Dorsolateral prefrontal cortex (tissue), 120 donors: ENCODE measurements at regions of chr9 and their contacts with region 1.

Region 1: GRCh38 chr9:111037381-111038305 is 627 bp downstream of the LPAR1 start:
- DNase-seq: peak in 4 of 10 donors; percentile 28 to 54 (median 42)
- H3K4me3 ChIP-seq: peak overlapping the region; percentile 45 to 88 (median 72)
- H3K27ac ChIP-seq: peak overlapping the region; percentile 38 to 97 (median 93)
- H3K27me3 ChIP-seq: peaks cover 0 to 49% (median 28%) of the 10 kb centered on the region in 45 donors
- CTCF ChIP-seq: peak in 19 of 56 donors; percentile 7 to 43 (median 21)

Region 2: DNA sequence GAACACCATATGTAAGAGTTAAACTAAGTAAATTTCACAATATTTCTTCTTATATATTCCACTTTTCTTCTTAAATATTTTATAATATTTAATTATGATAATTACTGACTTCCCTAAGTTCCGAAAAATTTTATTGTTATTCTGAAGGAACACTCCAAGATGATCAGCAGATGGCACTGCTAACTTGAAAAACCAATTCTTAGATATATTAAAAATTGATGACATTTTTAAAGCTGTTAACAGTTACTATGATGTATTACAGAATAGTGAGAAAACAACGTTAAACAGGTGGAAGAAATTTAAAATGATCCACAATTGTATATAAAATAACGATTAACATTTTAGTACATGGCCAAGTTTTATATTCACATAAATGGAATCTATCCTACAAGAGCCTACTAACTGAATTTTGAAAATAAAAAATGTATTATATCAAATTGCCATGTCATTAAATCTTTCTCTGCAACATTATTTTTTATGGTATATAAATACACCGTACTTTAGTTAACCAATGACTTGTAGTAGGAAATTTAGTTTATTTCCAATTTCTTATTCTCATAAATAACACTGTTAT is 399.2 kb before region 1 on chr9:
- intact Hi-C with region 1: loop called in 1 of 2 experiments (anchors 10 kb)
- DNase-seq: no peak
- H3K4me3 ChIP-seq: no peak overlapping the region
- H3K27ac ChIP-seq: peak overlapping the region in 4 of 59 donors; percentile 5 to 37 (median 13)
- H3K27me3 ChIP-seq: no peaks in the 10 kb centered on the region
- CTCF ChIP-seq: peak; percentile 37 to 87 (median 64)

Region 3: GRCh38 chr9:110650991-110651411 is 386.6 kb before region 1 on chr9:
- intact Hi-C with region 1: loop called (anchors 5 to 10 kb)
- DNase-seq: no peak
- H3K4me3 ChIP-seq: peak overlapping the region in 23 of 59 donors; percentile 3 to 51 (median 20)
- H3K27ac ChIP-seq: peak overlapping the region in 58 of 59 donors; percentile 74 to 98 (median 91)
- H3K27me3 ChIP-seq: no peaks in the 10 kb centered on the region
- CTCF ChIP-seq: no peak

Region 4: DNA sequence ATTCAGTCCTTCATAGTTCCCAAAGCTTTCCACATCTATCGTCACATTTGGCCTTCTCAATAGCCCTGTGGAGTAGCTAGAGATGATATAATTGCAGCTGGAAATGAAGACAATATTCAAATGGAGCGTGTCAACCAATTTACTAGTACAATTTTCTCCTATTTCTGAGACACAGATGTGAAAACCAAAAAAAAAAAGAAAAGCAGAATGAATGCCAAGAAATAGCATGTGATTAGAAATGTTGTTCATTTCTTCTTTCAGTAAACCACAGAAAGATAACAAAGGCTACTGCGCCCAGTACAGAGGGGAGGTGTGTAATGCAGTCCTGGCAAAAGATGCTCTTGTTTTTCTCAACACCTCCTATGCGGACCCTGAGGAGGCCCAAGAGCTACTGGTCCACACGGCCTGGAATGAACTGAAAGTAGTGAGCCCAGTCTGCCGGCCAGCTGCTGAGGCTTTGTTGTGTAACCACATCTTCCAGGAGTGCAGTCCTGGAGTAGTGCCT is 270.0 kb before region 1 on chr9:
- intact Hi-C with region 1: loop called (anchors 10 kb)
- DNase-seq: peak in 6 of 10 donors; percentile 31 to 54 (median 40)
- H3K4me3 ChIP-seq: peak overlapping the region in 25 of 59 donors; percentile 0 to 45 (median 22)
- H3K27ac ChIP-seq: peak overlapping the region; percentile 28 to 96 (median 89)
- H3K27me3 ChIP-seq: no peaks in the 10 kb centered on the region
- CTCF ChIP-seq: peak in 4 of 56 donors; percentile 3 to 11 (median 8)

Region 5: DNA sequence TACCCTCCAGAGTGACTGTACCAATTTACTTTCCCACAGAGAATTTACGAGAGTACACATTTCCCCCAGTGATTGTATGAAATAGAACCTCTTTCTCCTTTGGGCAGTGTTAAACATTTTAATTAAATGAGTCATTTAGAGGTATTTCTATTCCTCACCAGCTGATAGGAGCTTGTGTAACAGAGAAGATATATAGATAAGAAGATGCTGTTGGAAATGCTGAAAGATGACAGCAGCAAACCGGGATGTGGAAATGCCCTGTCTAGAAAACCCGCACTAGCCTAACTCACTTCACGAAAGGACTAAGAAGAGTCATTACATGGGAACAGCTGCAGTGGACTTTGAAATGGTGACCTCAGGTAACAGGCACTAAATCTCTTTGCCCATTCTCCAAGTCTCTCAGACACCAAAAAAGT is 67.7 kb before region 1 on chr9:
- intact Hi-C with region 1: loop called (anchors 5 to 10 kb)
- DNase-seq: no peak
- H3K4me3 ChIP-seq: no peak overlapping the region
- H3K27ac ChIP-seq: peak overlapping the region in 57 of 59 donors; percentile 9 to 97 (median 88)
- H3K27me3 ChIP-seq: no peaks in the 10 kb centered on the region
- CTCF ChIP-seq: no peak

Region 6: DNA sequence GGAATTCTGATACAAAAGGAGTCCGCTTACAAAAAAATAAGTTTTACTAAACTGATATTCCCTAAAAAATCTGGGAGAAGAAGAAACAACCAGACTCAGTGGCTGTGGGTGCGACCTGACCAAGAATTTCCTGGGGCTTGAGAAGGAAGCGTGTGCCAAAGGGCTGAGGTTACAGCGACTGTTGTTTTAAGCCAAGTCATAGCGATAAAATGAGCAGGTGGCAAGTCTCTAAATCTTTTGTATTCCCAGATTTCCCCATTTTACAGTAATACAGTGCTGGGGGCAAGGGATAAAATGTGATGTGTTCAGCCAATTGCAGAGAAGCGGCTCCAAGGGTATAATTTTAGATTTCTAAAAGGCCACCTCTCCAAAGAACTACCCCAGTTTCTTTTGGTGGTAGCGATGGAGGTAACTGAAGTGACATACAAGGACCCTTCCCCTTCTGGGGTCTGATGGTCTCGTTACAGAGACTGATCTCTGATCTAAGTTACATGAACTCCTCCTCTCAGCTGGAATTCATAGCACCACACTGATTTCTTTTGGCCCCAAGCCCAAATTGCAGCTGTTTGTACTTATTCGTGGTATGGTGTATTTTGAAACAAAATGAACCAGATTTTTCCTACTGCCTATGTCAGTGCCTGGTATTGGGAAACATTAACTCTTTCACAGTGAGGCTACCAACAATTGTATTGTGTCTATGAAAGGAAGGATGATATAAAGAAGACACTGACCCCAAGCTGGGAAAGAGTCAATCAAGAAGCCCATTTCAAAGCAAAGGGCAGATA is 41.0 kb before region 1 on chr9:
- intact Hi-C with region 1: loop called (anchors 2 to 5 kb)
- DNase-seq: peak in 1 of 10 donors; percentile 34
- H3K4me3 ChIP-seq: peak overlapping the region in 7 of 59 donors; percentile 5 to 59 (median 42)
- H3K27ac ChIP-seq: peak overlapping the region in 58 of 59 donors; percentile 9 to 96 (median 84)
- H3K27me3 ChIP-seq: no peaks in the 10 kb centered on the region
- CTCF ChIP-seq: no peak

Region 7: GRCh38 chr9:111298731-111299598 is 261.3 kb after region 1 on chr9:
- intact Hi-C with region 1: loop called (anchors 1 to 2 kb)
- DNase-seq: peak in 5 of 10 donors; percentile 23 to 64 (median 44)
- H3K4me3 ChIP-seq: peak overlapping the region in 56 of 59 donors; percentile 1 to 63 (median 38)
- H3K27ac ChIP-seq: peak overlapping the region; percentile 46 to 97 (median 89)
- H3K27me3 ChIP-seq: no peaks in the 10 kb centered on the region
- CTCF ChIP-seq: peak; percentile 79 to 98 (median 90)